ENCODE measurements at regions of chr20 and their contacts with region 1.

Region 1: GRCh38 chr20:58980700-58981627 is at the start of gene NELFCD:
- DNase-seq: peak; percentile 93
- ATAC-seq: peak; percentile 93
- H3K4me3 ChIP-seq: peak within 1 kb of the TSS; percentile 79 to 91 (median 80)
- H3K4me3 Mint-ChIP-seq: peak within 1 kb of the TSS; percentile 96
- H3K27ac ChIP-seq: peak within 1 kb of the TSS; percentile 71 to 76
- H3K27ac Mint-ChIP-seq: peak within 1 kb of the TSS; percentile 94
- H3K4me1 ChIP-seq: peaks cover 24 to 47% of the 10 kb centered on the region in 2 donors
- H3K4me1 Mint-ChIP-seq: peaks cover 43% of the 10 kb centered on the region
- H3K27me3 ChIP-seq: no peaks in the 10 kb centered on the region
- H3K27me3 Mint-ChIP-seq: no peaks in the 10 kb centered on the region
- CTCF ChIP-seq: no peak
- total RNA-seq, gene NELFCD: 107 and 108 TPM in 2 replicates

Region 2: GRCh38 chr20:58907399-58908137 is 73.4 kb before region 1 on chr20:
- CTCF ChIA-PET with region 1: no interaction called
- POLR2A ChIA-PET with region 1: interaction called, 3 read pairs
- intact Hi-C with region 1: loop called (anchors 1 kb)
- DNase-seq: peak; percentile 95
- ATAC-seq: peak; percentile 84
- H3K4me3 ChIP-seq: peak overlapping the region; percentile 24 to 54 (median 33)
- H3K4me3 Mint-ChIP-seq: peak overlapping the region; percentile 85
- H3K27ac ChIP-seq: peak overlapping the region; percentile 94 to 97
- H3K27ac Mint-ChIP-seq: peak overlapping the region; percentile 94
- H3K4me1 ChIP-seq: peaks cover 24 to 37% of the 10 kb centered on the region in 2 donors
- H3K4me1 Mint-ChIP-seq: peaks cover 59% of the 10 kb centered on the region
- H3K27me3 ChIP-seq: no peaks in the 10 kb centered on the region
- H3K27me3 Mint-ChIP-seq: no peaks in the 10 kb centered on the region
- CTCF ChIP-seq: no peak

Region 3: DNA sequence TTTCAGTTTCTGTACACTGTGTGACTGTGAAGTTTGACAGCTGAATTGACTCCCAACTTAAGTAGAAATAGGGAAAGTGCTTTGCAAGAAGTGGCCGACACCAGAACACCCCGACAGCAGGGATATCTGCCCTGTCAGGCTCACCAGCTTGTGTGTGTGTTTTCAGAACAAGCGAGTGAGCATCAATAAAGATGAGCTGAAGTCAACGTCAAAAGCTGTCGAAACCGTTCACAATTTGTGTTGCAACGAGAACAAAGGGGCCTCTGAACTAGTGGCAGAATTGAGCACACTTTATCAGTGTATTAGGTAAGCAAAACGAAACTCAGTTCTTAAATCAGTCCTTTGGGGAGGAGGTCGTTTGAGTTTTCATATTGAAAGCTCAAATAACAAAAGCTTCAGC is 10.8 kb after region 1 on chr20:
- CTCF ChIA-PET with region 1: interaction called, 6 read pairs
- POLR2A ChIA-PET with region 1: interaction called, 7 read pairs
- intact Hi-C with region 1: loop called (anchors 1 kb)
- DNase-seq: no peak
- ATAC-seq: no peak
- H3K4me3 ChIP-seq: no peak overlapping the region
- H3K4me3 Mint-ChIP-seq: no peak overlapping the region
- H3K27ac ChIP-seq: no peak overlapping the region
- H3K27ac Mint-ChIP-seq: peak overlapping the region; percentile 16
- H3K4me1 ChIP-seq: peaks cover 17 to 30% of the 10 kb centered on the region in 2 donors
- H3K4me1 Mint-ChIP-seq: peaks cover 40% of the 10 kb centered on the region
- H3K27me3 ChIP-seq: no peaks in the 10 kb centered on the region
- H3K27me3 Mint-ChIP-seq: no peaks in the 10 kb centered on the region
- CTCF ChIP-seq: no peak

Region 4: GRCh38 chr20:59042796-59043660 is 62.1 kb after region 1 on chr20:
- CTCF ChIA-PET with region 1: no interaction called
- POLR2A ChIA-PET with region 1: no interaction called
- intact Hi-C with region 1: loop called (anchors 1 kb)
- DNase-seq: peak; percentile 96
- ATAC-seq: peak; percentile 98
- H3K4me3 ChIP-seq: peak overlapping the region in 4 of 5 experiments; percentile 80 to 97 (median 86)
- H3K4me3 Mint-ChIP-seq: peak overlapping the region; percentile 94
- H3K27ac ChIP-seq: peak overlapping the region; percentile 69 to 89
- H3K27ac Mint-ChIP-seq: peak overlapping the region; percentile 93
- H3K4me1 ChIP-seq: peaks cover 45 to 47% of the 10 kb centered on the region in 2 donors
- H3K4me1 Mint-ChIP-seq: peaks cover 51% of the 10 kb centered on the region
- H3K27me3 ChIP-seq: no peaks in the 10 kb centered on the region
- H3K27me3 Mint-ChIP-seq: no peaks in the 10 kb centered on the region
- CTCF ChIP-seq: no peak

Measured in B cell (primary cell).